MCF 10A (cell line): ENCODE measurements at regions of chr2 and their contacts with region 1.

Region 1: DNA sequence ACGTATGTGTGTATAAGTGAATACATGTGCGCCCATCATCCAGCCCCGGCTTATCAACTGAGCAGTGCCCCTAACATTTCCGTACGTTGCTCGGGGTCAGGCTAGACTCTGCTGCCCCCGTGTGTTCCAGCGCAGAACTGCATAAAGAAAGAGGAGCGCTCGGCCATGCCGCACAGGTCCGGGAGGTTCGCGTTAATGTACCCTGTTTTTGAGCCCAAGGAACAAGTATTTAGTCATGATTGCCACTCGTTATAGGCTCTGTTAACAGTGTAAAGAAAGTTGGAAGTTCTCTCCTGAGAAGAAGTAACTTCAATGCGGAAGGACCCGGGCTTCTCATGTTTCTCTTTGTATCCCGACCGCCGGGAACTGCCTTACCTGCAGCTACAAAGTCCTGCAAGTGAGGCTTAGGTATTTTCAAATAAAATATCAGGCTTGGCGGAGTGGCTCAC is 55.7 kb downstream of the CD8B2 start:
- DNase-seq: peak; percentile 69
- H3K4me3 Mint-ChIP-seq: peak overlapping the region; percentile 54
- H3K27ac Mint-ChIP-seq: peak overlapping the region; percentile 11
- H3K4me1 Mint-ChIP-seq: peaks cover 5% of the 10 kb centered on the region
- H3K27me3 Mint-ChIP-seq: peaks cover 9% of the 10 kb centered on the region
- CTCF ChIP-seq: peak; percentile 94

Region 2: DNA sequence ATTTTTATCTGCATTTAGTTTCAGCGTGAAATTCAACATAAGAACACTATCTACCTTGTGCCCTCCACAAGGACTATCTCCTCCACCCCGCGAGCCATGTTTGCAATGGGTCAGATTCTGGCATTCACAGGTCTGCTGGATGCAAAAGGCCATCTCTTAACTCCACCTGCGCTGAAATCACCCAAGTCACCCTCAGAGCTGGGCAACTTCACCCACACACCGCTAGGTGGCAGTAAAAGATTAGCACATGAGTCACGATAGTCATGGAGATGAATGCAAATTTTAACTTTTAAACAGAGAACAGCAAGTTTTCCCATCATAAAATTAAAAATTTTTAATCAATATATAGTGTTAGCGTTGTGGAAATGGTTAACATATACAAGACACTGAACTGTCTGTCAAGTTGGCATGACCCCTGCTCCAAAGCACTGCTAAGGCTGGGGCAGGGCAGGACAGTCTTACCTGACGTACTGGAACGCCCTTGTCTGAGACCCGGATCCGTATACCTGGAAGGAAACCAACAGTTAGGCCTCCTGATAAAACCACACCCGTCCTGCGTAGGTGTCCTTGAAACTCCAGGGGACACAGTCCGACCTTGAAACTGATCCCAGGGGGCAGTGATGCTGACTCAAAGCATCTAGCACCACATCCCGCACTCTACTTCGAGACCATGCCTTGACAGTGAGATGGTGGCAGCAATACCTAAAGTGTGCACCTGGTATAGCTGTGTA is 438.3 kb before region 1 on chr2:
- CTCF ChIA-PET with region 1: interaction called, 16 read pairs
- POLR2A ChIA-PET with region 1: interaction called, 3 read pairs
- intact Hi-C with region 1: loop called (anchors 1 kb)
- DNase-seq: peak; percentile 76
- H3K4me3 Mint-ChIP-seq: no peak overlapping the region
- H3K27ac Mint-ChIP-seq: no peak overlapping the region
- H3K4me1 Mint-ChIP-seq: no peaks in the 10 kb centered on the region
- H3K27me3 Mint-ChIP-seq: no peaks in the 10 kb centered on the region
- CTCF ChIP-seq: peak; percentile 91

Region 3: GRCh38 chr2:106531745-106532144 is 11.1 kb before region 1 on chr2:
- CTCF ChIA-PET with region 1: interaction called, 10 read pairs
- POLR2A ChIA-PET with region 1: no interaction called
- intact Hi-C with region 1: no loop called
- DNase-seq: no peak
- H3K4me3 Mint-ChIP-seq: no peak overlapping the region
- H3K27ac Mint-ChIP-seq: no peak overlapping the region
- H3K4me1 Mint-ChIP-seq: no peaks in the 10 kb centered on the region
- H3K27me3 Mint-ChIP-seq: peaks cover 46% of the 10 kb centered on the region
- CTCF ChIP-seq: no peak

Region 4: GRCh38 chr2:106552921-106553320 is 10.1 kb after region 1 on chr2:
- CTCF ChIA-PET with region 1: interaction called, 20 read pairs
- POLR2A ChIA-PET with region 1: interaction called, 3 read pairs
- intact Hi-C with region 1: no loop called
- DNase-seq: no peak
- H3K4me3 Mint-ChIP-seq: no peak overlapping the region
- H3K27ac Mint-ChIP-seq: no peak overlapping the region
- H3K4me1 Mint-ChIP-seq: no peaks in the 10 kb centered on the region
- H3K27me3 Mint-ChIP-seq: no peaks in the 10 kb centered on the region
- CTCF ChIP-seq: no peak